K562 (cell line): ENCODE measurements at regions of chr17 and their contacts with region 1.

Region 1: DNA sequence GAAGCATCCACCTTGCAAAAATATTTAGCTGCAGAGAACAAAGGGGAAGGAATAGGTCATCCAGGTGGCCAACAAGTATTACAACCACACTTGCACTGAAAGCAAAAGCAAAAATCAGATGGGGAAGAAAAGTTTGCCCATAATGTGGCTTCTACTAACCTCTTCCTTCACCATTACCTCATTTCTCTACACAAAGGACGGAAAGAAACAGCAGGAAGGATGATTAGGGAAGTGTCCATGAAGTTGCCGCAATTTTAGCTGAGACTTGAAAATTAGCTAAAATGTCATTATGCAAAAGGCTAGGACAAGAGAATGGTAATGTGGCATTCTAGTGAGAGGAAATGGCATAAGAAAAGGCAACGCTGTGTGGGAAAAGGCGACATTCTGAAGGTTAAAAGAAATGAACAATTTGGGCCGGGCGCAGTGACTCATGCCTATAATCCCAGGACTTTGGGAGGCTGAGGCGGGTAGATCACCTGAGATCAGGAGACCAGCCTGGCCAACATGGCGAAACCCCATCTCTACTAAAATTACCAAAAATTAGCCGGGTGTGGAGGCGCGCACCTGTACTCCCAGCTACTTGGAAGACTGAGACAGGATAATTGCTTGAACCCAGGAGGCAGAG is 13.7 kb downstream of the KANSL1 start:
- DNase-seq: no peak
- ATAC-seq: no peak
- H3K4me3 ChIP-seq: no peak overlapping the region
- H3K27ac ChIP-seq: no peak overlapping the region
- H3K4me1 ChIP-seq: peaks cover 19 to 51% of the 10 kb centered on the region in 2 experiments; a peak in 4 of 5 replicates
- H3K27me3 ChIP-seq: no peaks in the 10 kb centered on the region
- CTCF ChIP-seq: no peak
- EP300 ChIP-seq: no peak
- POLR2A ChIP-seq: no peak
- RAD21 ChIP-seq: no peak

Region 2: DNA sequence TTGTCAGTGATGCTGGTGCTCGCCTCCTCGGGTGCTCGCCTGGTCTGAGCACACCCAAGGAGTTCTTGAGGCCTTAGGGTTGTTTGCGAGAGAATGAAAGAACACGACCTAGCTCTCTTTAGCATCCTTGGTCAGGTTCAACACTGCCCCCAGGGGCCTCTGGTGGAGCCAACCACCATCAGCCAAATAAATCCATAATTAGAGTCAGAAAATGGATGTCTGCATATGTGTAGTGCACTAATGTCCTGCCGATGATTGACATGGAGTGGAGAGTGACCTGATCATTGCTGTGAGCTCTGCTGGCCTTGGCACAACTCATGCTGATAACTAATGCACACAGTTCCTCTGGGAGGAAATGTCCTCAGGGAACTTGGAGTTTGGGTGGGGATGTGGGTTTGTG is 188.6 kb before region 1 on chr17:
- CTCF ChIA-PET with region 1: no interaction called
- POLR2A ChIA-PET with region 1: no interaction called
- in situ Hi-C with region 1: no loop called
- intact Hi-C with region 1: no loop called
- DNase-seq: peak in 2 of 4 experiments; percentile 31 to 39
- ATAC-seq: peak; percentile 79
- H3K4me3 ChIP-seq: no peak overlapping the region
- H3K27ac ChIP-seq: no peak overlapping the region; the same call in 2 of the 3 replicates
- H3K4me1 ChIP-seq: peaks cover 0 to 3% of the 10 kb centered on the region in 2 experiments; a peak in 3 of 5 replicates
- H3K27me3 ChIP-seq: no peaks in the 10 kb centered on the region
- CTCF ChIP-seq: peak; percentile 39 to 55 (median 41)
- EP300 ChIP-seq: no peak
- POLR2A ChIP-seq: no peak
- RAD21 ChIP-seq: peak in 1 of 2 experiments; percentile 33; a peak in 2 of 4 replicates

Region 3: GRCh38 chr17:46159686-46160085 is 19.8 kb before region 1 on chr17:
- CTCF ChIA-PET with region 1: no interaction called
- POLR2A ChIA-PET with region 1: interaction called, 26 read pairs
- in situ Hi-C with region 1: no loop called
- intact Hi-C with region 1: no loop called
- DNase-seq: peak in 2 of 4 experiments; percentile 43 to 46
- ATAC-seq: peak; percentile 59
- H3K4me3 ChIP-seq: no peak overlapping the region
- H3K27ac ChIP-seq: no peak overlapping the region
- H3K4me1 ChIP-seq: peaks cover 0 to 26% of the 10 kb centered on the region in 2 experiments; a peak in 3 of 5 replicates
- H3K27me3 ChIP-seq: no peaks in the 10 kb centered on the region
- CTCF ChIP-seq: no peak
- EP300 ChIP-seq: no peak
- POLR2A ChIP-seq: no peak
- RAD21 ChIP-seq: no peak

Region 4: DNA sequence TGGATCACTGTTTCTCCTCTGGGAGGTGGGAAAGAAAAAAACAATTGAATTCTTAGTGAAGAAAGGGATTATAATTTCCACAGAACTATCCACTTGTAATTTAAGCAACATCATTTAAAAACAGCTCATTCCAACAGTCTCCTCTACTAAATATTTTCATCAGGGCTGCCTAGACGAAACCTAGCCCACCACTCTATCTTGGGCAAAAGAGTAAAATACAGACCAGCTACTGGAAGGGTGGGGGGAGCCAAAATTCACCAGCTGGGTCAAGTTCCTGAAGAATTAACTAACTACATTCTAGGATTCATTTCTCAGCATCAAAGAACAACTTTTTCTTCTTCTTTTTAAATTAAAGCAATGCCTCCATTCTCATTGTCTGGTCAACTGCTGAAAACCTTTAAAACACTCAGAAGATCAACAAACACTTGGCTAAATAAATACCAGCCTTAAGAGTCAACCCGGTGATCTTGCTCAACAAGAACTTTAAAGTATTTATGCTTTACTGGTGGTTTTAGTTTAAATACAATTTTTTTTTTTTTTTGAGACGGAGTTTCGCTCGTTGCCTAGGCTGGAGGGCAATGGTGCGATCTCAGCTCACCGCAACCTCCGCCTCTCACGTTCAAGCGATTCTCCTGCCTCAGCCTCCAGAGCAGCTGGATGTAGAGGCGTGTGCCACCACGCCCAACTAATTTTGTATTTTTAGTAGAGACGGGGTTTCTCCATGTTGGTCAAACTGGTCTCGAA is 11.5 kb before region 1 on chr17:
- CTCF ChIA-PET with region 1: no interaction called
- POLR2A ChIA-PET with region 1: interaction called, 26 read pairs
- in situ Hi-C with region 1: no loop called
- intact Hi-C with region 1: no loop called
- DNase-seq: no peak
- ATAC-seq: no peak
- H3K4me3 ChIP-seq: no peak overlapping the region
- H3K27ac ChIP-seq: no peak overlapping the region
- H3K4me1 ChIP-seq: peaks cover 0 to 3% of the 10 kb centered on the region in 2 experiments; a peak in 2 of 5 replicates
- H3K27me3 ChIP-seq: no peaks in the 10 kb centered on the region
- CTCF ChIP-seq: no peak
- EP300 ChIP-seq: no peak
- POLR2A ChIP-seq: no peak
- RAD21 ChIP-seq: no peak